Naive thymus-derived CD4-positive, alpha-beta T cell (primary cell): ENCODE measurements at regions of chr7 and their contacts with region 1.

Region 1: GRCh38 chr7:157851501-157852067 is 514.8 kb downstream of the DNAJB6 start:
- DNase-seq: peak; percentile 57 to 90 (median 82)
- ATAC-seq: peak; percentile 86
- H3K4me3 ChIP-seq: peak overlapping the region; percentile 46
- H3K4me3 Mint-ChIP-seq: peak overlapping the region; percentile 67 to 86 (median 84)
- H3K27ac ChIP-seq: peak overlapping the region; percentile 68
- H3K27ac Mint-ChIP-seq: peak overlapping the region; percentile 89 to 100 (median 97)
- H3K4me1 ChIP-seq: peaks cover 0 to 20% of the 10 kb centered on the region in 2 donors
- H3K4me1 Mint-ChIP-seq: peaks cover 5 to 30% (median 18%) of the 10 kb centered on the region in 7 donors
- H3K27me3 ChIP-seq: no peaks in the 10 kb centered on the region
- H3K27me3 Mint-ChIP-seq: no peaks in the 10 kb centered on the region

Region 2: GRCh38 chr7:156865493-156865892 is 986.1 kb before region 1 on chr7:
- CTCF ChIA-PET with region 1: no interaction called
- POLR2A ChIA-PET with region 1: no interaction called
- intact Hi-C with region 1: no loop called
- DNase-seq: no peak
- ATAC-seq: no peak
- H3K4me3 ChIP-seq: no peak overlapping the region
- H3K4me3 Mint-ChIP-seq: no peak overlapping the region
- H3K27ac ChIP-seq: no peak overlapping the region
- H3K27ac Mint-ChIP-seq: no peak overlapping the region
- H3K4me1 ChIP-seq: no peaks in the 10 kb centered on the region
- H3K4me1 Mint-ChIP-seq: peaks cover 0 to 48% (median 34%) of the 10 kb centered on the region in 7 donors
- H3K27me3 ChIP-seq: no peaks in the 10 kb centered on the region
- H3K27me3 Mint-ChIP-seq: no peaks in the 10 kb centered on the region

Region 3: DNA sequence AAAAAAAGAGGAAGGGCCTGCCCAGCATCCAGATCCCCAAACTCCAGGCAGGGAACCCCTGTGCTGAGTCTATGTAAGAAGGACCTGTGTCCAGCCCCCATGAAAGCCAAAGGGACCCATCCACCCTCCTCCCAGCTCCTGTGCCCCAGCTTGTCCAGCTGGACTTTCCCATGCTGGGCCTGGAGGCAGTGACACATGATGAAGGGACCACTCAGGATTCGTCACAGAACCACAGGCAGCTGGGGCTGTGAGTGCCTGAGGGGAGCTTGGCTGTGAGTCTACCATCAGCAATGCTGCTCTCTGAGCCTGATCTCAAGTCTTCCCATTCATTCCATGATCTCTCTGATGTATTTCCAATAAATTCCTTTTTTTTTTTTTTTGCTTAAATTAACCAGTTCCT is 804.9 kb before region 1 on chr7:
- CTCF ChIA-PET with region 1: no interaction called
- POLR2A ChIA-PET with region 1: no interaction called
- intact Hi-C with region 1: no loop called
- DNase-seq: no peak
- ATAC-seq: no peak
- H3K4me3 ChIP-seq: no peak overlapping the region
- H3K4me3 Mint-ChIP-seq: no peak overlapping the region
- H3K27ac ChIP-seq: no peak overlapping the region
- H3K27ac Mint-ChIP-seq: no peak overlapping the region
- H3K4me1 ChIP-seq: no peaks in the 10 kb centered on the region
- H3K4me1 Mint-ChIP-seq: no peaks in the 10 kb centered on the region
- H3K27me3 ChIP-seq: no peaks in the 10 kb centered on the region
- H3K27me3 Mint-ChIP-seq: peaks cover 0 to 18% (median 13%) of the 10 kb centered on the region in 5 donors

Region 4: DNA sequence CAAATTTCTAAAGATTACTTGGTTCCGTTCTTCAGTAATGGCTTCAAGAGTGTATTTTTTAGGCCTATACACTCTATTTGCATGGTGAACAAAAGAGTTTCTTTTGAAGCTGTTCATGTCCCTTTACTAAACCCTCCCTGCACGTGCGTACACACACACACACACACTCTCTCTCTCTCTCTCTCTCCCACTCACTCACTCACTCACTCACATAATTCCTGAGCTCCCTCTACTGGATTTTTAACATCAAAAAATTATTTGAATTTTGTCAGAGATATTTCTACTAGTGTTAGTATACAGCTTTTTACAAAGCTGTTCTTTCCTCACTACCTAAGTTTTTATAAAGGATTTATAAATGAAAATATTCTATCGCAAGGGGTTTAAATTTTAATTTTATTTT is 627.0 kb before region 1 on chr7:
- CTCF ChIA-PET with region 1: no interaction called
- POLR2A ChIA-PET with region 1: no interaction called
- intact Hi-C with region 1: no loop called
- DNase-seq: no peak
- ATAC-seq: no peak
- H3K4me3 ChIP-seq: no peak overlapping the region
- H3K4me3 Mint-ChIP-seq: no peak overlapping the region
- H3K27ac ChIP-seq: no peak overlapping the region
- H3K27ac Mint-ChIP-seq: peak overlapping the region in 1 of 9 donors; percentile 74
- H3K4me1 ChIP-seq: no peaks in the 10 kb centered on the region
- H3K4me1 Mint-ChIP-seq: peaks cover 0 to 4% (median 0%) of the 10 kb centered on the region in 7 donors
- H3K27me3 ChIP-seq: no peaks in the 10 kb centered on the region
- H3K27me3 Mint-ChIP-seq: no peaks in the 10 kb centered on the region

Region 5: DNA sequence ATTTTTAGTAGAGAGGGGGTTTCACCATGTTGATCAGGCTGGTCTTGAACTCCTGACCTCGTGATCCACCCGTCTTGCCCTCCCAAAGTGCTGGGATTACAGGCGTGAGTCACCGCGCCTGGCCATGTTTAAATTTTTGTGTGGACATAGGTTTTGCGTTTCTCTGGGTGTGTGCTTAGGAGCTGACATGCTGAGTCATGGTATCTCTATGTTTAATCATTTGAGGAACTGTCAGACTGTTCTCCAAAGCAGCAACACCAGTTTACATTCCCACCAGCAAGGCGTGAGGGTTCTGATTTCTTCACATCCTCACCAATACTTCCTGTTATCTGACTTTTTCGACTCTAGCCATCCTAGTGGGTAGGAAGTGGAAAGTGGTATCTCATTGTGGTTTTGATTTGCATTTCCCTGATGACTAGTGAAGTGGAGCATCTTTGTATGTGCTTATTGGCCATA is 361.1 kb before region 1 on chr7:
- CTCF ChIA-PET with region 1: no interaction called
- POLR2A ChIA-PET with region 1: no interaction called
- intact Hi-C with region 1: loop called in 1 of 2 experiments (anchors 5 kb)
- DNase-seq: peak in 8 of 9 donors; percentile 48 to 83 (median 79)
- ATAC-seq: peak; percentile 96
- H3K4me3 ChIP-seq: no peak overlapping the region
- H3K4me3 Mint-ChIP-seq: peak overlapping the region; percentile 23 to 76 (median 51)
- H3K27ac ChIP-seq: no peak overlapping the region
- H3K27ac Mint-ChIP-seq: peak overlapping the region; percentile 12 to 90 (median 63)
- H3K4me1 ChIP-seq: peaks cover 18 to 21% of the 10 kb centered on the region in 2 donors
- H3K4me1 Mint-ChIP-seq: peaks cover 20 to 55% (median 41%) of the 10 kb centered on the region in 7 donors
- H3K27me3 ChIP-seq: no peaks in the 10 kb centered on the region
- H3K27me3 Mint-ChIP-seq: peaks cover 0 to 33% (median 10%) of the 10 kb centered on the region in 5 donors

Region 6: DNA sequence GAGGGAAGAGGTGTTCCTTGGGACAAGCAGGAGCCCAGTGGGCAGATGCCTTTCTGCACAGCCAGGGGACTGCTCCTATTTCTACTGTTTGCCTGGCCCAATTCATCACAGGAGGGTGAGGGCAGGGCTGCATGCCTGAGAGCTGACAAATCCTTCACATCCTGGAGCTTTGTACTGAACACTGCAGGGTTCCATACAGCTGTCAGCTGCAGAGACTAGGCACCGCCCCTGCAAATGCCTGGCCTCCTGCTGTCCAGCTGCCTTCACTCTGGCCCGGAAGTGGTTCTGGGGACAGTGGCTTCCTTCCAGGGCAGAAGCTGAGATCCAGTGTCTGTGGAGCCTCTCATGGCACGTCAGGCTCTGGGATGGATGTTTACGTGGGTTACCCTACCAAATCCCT is 44.1 kb before region 1 on chr7:
- CTCF ChIA-PET with region 1: no interaction called
- POLR2A ChIA-PET with region 1: no interaction called
- intact Hi-C with region 1: loop called in 1 of 2 experiments (anchors 10 kb)
- DNase-seq: no peak
- ATAC-seq: no peak
- H3K4me3 ChIP-seq: no peak overlapping the region
- H3K4me3 Mint-ChIP-seq: no peak overlapping the region
- H3K27ac ChIP-seq: no peak overlapping the region
- H3K27ac Mint-ChIP-seq: no peak overlapping the region
- H3K4me1 ChIP-seq: no peaks in the 10 kb centered on the region
- H3K4me1 Mint-ChIP-seq: peaks cover 0 to 2% (median 0%) of the 10 kb centered on the region in 7 donors
- H3K27me3 ChIP-seq: no peaks in the 10 kb centered on the region
- H3K27me3 Mint-ChIP-seq: no peaks in the 10 kb centered on the region

Region 7: DNA sequence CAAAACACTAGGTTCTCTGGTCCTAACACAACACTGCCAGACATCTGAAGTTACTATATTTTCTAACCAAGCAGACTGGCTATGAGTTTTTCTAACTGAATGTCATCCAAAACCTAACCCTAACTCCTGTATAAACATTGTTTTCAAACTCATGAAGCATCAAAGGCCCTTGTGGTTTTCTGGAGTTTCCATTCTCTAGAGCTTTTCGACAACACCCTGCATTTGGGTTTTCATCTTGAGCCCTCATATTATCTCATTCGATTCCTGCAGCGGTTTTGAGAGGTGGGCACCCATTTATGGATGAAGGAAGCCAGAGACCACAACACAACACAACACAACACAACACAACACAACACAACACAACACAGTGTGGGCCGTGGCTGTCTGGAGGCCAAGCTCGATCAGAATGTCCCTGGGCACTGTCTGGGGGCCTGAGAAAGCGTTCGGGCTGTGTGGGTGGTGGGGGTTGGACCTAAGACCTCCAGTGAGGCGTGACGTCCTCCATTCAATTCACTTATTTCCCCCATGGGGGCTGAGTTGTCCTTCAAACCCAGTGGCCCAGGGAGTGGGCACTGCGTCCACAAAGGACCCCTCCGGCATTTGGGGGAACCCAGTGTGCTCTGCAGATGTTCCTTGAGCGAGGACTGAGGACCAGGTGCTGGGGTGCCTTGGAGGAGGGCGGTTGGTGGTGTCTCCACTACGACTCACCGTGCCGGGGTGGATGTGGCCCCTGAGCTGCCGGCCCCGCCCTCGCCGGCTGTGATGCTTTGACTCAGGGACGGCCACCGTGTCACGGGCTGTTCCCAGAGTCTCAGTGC is 24.3 kb before region 1 on chr7:
- CTCF ChIA-PET with region 1: interaction called, 4 read pairs
- POLR2A ChIA-PET with region 1: interaction called, 43 read pairs
- intact Hi-C with region 1: loop called in 1 of 2 experiments (anchors 1 kb)
- DNase-seq: peak in 7 of 9 donors; percentile 53 to 79 (median 67)
- ATAC-seq: peak; percentile 74
- H3K4me3 ChIP-seq: peak overlapping the region; percentile 37
- H3K4me3 Mint-ChIP-seq: peak overlapping the region; percentile 45 to 83 (median 78)
- H3K27ac ChIP-seq: peak overlapping the region; percentile 40
- H3K27ac Mint-ChIP-seq: peak overlapping the region; percentile 66 to 96 (median 89)
- H3K4me1 ChIP-seq: peaks cover 0 to 47% of the 10 kb centered on the region in 2 donors
- H3K4me1 Mint-ChIP-seq: peaks cover 9 to 58% (median 45%) of the 10 kb centered on the region in 7 donors
- H3K27me3 ChIP-seq: no peaks in the 10 kb centered on the region
- H3K27me3 Mint-ChIP-seq: no peaks in the 10 kb centered on the region

Region 8: GRCh38 chr7:158228986-158229385 is 377.4 kb after region 1 on chr7:
- CTCF ChIA-PET with region 1: no interaction called
- POLR2A ChIA-PET with region 1: no interaction called
- intact Hi-C with region 1: no loop called
- DNase-seq: no peak
- ATAC-seq: no peak
- H3K4me3 ChIP-seq: no peak overlapping the region
- H3K4me3 Mint-ChIP-seq: no peak overlapping the region
- H3K27ac ChIP-seq: no peak overlapping the region
- H3K27ac Mint-ChIP-seq: no peak overlapping the region
- H3K4me1 ChIP-seq: no peaks in the 10 kb centered on the region
- H3K4me1 Mint-ChIP-seq: no peaks in the 10 kb centered on the region
- H3K27me3 ChIP-seq: no peaks in the 10 kb centered on the region
- H3K27me3 Mint-ChIP-seq: peaks cover 0 to 30% (median 22%) of the 10 kb centered on the region in 5 donors